ENCODE measurements at regions of chr12 and their contacts with region 1.

Region 1: DNA sequence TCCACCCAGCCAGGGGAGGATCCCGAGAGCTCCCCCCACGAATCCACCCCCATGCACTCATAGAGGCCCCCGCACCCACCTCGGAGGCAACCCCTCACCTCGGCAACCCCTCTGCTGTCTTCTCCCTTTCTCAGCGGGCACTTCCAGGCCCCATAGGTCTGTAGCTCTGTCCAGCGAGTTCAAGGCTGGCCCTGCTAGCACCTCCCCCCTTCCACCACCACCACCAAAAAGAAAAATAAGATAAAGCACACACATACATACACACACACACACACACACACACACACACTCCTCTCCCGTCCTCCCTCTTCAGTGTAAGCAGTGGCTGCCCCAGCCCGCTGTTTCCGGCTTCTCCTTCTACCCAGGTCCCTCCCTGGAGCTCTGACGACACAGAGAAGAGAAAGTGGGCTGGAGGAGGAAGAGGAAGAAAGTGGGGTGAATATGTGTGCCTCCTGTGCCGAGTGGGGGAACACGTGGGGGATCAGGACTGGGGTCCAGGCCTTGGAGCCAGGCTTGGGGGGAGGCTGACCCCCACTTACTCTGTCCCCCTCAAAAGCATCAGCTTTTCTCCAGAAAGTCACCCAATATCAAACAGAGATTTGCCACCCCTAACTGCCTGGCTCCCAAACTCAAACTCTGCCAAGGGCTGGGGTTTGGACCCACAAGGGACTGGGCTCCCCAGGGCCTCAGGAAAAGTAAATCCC is at the start of gene STAT6:
- DNase-seq: peak; percentile 89
- H3K4me3 ChIP-seq: peak within 1 kb of the TSS; percentile 90
- H3K27ac ChIP-seq: peak within 1 kb of the TSS; percentile 75
- H3K4me1 ChIP-seq: peaks cover 35% of the 10 kb centered on the region
- CTCF ChIP-seq: 0 out of 2 replicates have a peak, but pooled peaks have one; percentile 26
- total RNA-seq, gene STAT6: 72.3 and 73.6 TPM in 2 replicates

Region 2: DNA sequence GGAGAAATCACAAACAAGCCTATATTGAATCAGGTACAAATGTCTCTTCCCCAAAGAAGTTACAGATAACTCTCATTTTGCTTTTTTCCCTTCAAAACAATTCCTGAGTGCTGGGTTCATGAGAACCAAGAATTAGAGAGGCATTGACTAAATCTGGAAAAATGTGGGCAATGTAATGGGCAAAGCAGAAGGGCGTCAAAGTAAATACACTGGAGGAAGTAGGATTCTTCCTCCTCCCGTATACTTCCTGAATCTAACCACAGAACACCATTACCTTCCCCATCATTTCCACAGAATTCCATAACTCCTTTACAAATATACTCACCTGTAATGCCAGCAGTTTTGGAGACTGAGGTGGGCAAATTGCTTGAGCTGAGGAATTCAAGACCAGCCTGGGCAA is 592.6 kb before region 1 on chr12:
- CTCF ChIA-PET with region 1: no interaction called
- POLR2A ChIA-PET with region 1: no interaction called
- intact Hi-C with region 1: loop called (anchors 10 kb)
- DNase-seq: no peak
- H3K4me3 ChIP-seq: no peak overlapping the region
- H3K27ac ChIP-seq: no peak overlapping the region
- H3K4me1 ChIP-seq: no peaks in the 10 kb centered on the region
- CTCF ChIP-seq: no peak

Region 3: GRCh38 chr12:56763753-56764657 is 347.2 kb before region 1 on chr12:
- CTCF ChIA-PET with region 1: interaction called, 4 read pairs
- POLR2A ChIA-PET with region 1: interaction called, 10 read pairs
- intact Hi-C with region 1: no loop called
- DNase-seq: no peak
- H3K4me3 ChIP-seq: no peak overlapping the region
- H3K27ac ChIP-seq: no peak overlapping the region
- H3K4me1 ChIP-seq: peaks cover 17% of the 10 kb centered on the region
- CTCF ChIP-seq: no peak

Region 4: DNA sequence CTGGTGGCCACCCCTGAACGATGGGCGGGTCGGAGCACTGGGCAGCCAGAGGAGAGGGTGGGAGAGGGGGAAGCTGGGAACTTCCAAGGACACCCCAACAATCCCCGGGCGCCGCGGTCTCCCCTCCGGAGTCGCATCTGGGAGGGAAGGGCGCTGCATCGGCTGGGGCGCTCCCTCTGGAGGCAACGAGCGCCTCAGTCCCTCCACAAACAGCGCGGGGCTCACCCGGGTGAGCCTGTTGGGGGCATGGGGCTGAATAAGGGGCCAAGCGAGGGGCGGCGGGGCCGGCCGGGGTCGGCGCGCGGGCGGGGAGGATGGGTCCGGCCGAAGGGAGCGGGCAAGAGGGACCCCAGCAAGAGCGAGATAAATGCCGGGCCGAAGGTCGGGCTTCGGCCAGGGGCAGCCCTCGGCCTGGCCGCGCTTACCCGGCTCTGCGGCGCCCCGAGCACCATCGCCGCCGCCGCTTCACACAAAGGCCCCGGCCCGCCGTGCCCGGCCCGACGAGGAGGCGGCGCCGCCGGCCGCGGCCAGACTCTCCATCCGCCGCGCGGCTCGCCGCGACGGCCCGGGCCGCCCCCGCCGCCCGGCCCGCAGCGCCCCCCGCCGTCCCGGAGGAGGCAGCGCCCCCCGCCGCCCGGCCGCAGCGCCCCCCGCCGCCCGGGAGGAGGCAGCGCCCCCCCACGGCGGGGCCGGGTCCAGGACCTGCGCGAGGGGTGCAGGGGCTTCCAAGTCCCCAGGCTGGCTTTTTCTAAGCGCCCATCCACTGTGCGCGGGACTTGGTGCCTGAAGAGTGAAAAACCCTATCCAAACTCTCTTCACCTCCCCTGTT is 105.0 kb before region 1 on chr12 and contains the start of gene ZBTB39:
- CTCF ChIA-PET with region 1: interaction called, 12 read pairs
- POLR2A ChIA-PET with region 1: interaction called, 4 read pairs
- intact Hi-C with region 1: loop called (anchors 1 kb)
- DNase-seq: peak; percentile 84
- H3K4me3 ChIP-seq: peak within 1 kb of the TSS; percentile 92
- H3K27ac ChIP-seq: peak within 1 kb of the TSS; percentile 44
- H3K4me1 ChIP-seq: peaks cover 15% of the 10 kb centered on the region
- CTCF ChIP-seq: peak; percentile 76
- total RNA-seq, gene ZBTB39: 10.9 TPM in 2 replicates

Region 5: GRCh38 chr12:57069523-57069922 is 41.7 kb before region 1 on chr12:
- CTCF ChIA-PET with region 1: interaction called, 26 read pairs
- POLR2A ChIA-PET with region 1: interaction called, 45 read pairs
- intact Hi-C with region 1: loop called (anchors 1 kb)
- DNase-seq: peak; percentile 82
- H3K4me3 ChIP-seq: no peak overlapping the region
- H3K27ac ChIP-seq: peak overlapping the region; percentile 30
- H3K4me1 ChIP-seq: peaks cover 27% of the 10 kb centered on the region
- CTCF ChIP-seq: peak; percentile 94

Region 6: DNA sequence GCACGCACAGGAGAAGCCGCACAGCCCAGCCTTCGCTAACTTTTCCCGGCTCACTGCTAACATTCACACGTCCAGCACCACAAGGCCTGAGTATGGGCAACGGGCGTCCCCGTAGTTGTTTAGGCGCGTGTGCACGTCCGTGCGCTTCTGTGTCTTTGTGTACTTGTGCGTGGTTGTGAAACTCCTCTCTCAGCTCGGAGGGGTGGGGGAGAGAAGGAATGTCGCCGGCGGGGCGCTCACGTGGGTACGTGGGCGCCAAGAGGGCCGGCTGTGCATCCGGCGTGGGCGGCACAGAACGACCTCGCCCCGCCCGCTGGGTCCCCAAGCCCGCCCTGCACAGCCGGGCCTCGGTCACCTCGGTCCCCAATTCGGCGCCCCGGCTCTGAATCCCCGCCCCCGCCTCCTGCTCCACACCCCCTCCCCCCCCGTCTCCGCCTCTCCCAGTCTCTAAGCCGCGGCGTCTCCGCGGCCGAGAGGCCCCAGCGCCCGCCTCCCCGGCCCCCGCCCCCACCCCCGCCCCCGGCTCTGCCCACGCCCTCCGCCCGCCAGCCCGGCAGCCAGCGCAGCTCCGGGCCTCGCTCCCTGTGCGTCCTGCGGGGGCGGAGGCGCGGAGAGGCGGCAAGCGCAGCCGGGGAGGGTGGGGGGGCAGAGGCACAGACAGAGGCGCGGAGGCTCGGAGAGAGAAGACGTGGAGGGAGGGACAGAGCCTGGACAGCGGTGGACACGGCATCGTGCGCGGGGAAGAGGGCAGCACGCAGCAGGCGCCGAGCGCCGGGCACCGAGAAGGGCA is 22.5 kb before region 1 on chr12 and contains the start of gene NAB2:
- CTCF ChIA-PET with region 1: interaction called, 4 read pairs
- POLR2A ChIA-PET with region 1: interaction called, 9 read pairs
- intact Hi-C with region 1: loop called (anchors 1 kb)
- DNase-seq: peak; percentile 96
- H3K4me3 ChIP-seq: peak within 1 kb of the TSS; percentile 80
- H3K27ac ChIP-seq: peak within 1 kb of the TSS; percentile 88
- H3K4me1 ChIP-seq: peaks cover 42% of the 10 kb centered on the region
- CTCF ChIP-seq: no peak
- total RNA-seq, gene NAB2: 8.5 and 9.6 TPM in 2 replicates

Region 7: DNA sequence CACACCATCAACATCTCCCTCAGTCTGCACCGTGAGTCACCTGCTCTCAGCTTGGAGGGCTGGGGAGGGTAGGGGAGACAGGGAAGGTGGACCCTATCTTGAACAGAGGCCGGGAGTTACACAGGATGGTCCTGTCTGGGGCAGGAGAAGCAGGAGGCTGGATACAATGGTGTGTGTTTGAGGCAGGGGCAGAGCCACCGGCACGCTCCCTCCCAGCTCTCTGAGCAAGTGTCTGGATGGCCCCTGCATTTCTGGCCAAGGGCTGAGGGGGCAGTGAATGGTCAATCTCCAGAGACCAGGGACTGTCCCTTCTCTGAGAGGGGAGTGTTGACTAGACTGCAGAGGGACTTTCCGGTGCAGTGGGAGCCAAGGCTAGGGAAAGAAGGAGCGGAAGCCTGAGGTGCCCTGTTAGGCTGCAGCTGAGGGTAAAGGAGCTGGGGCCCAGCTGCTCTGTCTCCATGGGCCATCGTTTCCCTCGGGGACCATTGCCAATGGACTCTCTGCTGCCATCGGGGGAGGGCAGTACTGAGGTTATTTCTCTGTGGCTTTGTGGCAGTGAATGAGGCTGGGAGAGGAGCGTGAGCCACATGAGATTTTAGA is 34.4 kb after region 1 on chr12:
- CTCF ChIA-PET with region 1: interaction called, 10 read pairs
- POLR2A ChIA-PET with region 1: no interaction called
- intact Hi-C with region 1: no loop called
- DNase-seq: no peak
- H3K4me3 ChIP-seq: no peak overlapping the region
- H3K27ac ChIP-seq: no peak overlapping the region
- H3K4me1 ChIP-seq: no peaks in the 10 kb centered on the region
- CTCF ChIP-seq: no peak

Measured in OCI-LY7 (cell line).